ENCODE measurements at regions of chr14 and their contacts with region 1.

Region 1: DNA sequence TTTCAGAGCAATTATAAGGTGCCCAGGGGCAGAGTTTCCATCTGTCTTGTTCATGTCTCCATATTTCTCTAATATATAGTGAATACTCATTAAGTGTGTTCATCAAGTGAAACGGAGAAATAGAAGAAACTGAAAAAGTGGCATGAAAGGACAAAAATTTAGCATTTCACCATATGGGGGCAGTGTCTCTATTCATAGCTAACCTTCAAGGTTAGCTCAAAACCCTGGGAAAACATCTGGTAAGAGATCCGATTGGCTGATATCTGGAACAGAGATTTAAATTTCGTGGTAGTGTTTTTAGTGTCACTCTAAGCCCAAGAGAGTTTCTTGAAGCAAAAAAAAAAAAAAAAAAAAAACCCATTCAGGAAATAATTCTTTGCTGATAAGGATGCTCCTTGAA is 367.5 kb downstream of the DAD1 start:
- DNase-seq: peak; percentile 72
- ATAC-seq: no peak
- H3K4me3 ChIP-seq: no peak overlapping the region
- H3K27ac ChIP-seq: no peak overlapping the region
- H3K4me1 ChIP-seq: peaks cover 13% of the 10 kb centered on the region
- H3K27me3 ChIP-seq: no peaks in the 10 kb centered on the region
- CTCF ChIP-seq: peak; percentile 79

Region 2: GRCh38 chr14:22036541-22037239 is 184.8 kb before region 1 on chr14:
- CTCF ChIA-PET with region 1: no interaction called
- POLR2A ChIA-PET with region 1: no interaction called
- intact Hi-C with region 1: no loop called
- DNase-seq: no peak
- ATAC-seq: no peak
- H3K4me3 ChIP-seq: no peak overlapping the region
- H3K27ac ChIP-seq: no peak overlapping the region
- H3K4me1 ChIP-seq: no peaks in the 10 kb centered on the region
- H3K27me3 ChIP-seq: peaks cover 19% of the 10 kb centered on the region
- CTCF ChIP-seq: no peak

Region 3: DNA sequence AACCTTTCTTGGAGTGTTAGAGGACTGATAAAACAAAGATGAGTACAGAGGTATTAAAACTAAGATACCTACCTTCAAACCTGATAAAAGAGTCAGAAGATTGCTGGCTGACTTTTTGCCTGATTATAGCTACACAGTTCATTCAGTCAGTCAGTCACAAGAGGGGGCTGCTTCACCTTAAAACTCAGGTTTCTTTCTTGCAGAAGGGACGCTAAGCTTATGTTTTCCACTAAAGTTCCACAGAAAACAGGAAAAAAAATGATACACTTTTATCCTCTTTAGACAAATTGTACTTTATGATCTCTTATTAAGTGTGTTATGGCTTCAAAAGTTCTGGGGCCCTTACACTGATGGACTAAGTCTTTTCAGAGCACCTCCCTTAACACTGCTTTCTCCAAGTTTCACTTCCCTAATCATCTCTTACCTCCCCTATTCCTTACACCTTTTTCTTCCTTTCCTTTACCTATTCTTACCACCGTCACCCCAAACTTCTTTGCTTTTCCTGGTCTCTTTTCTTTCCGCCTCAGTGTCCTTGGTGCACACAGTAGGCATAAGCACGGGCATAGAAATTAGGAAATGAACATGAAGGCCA is 99.2 kb before region 1 on chr14:
- CTCF ChIA-PET with region 1: interaction called, 10 read pairs
- POLR2A ChIA-PET with region 1: no interaction called
- intact Hi-C with region 1: no loop called
- DNase-seq: peak; percentile 41
- ATAC-seq: peak; percentile 37; the same call in 1 of the 2 replicates
- H3K4me3 ChIP-seq: no peak overlapping the region
- H3K27ac ChIP-seq: no peak overlapping the region
- H3K4me1 ChIP-seq: no peaks in the 10 kb centered on the region
- H3K27me3 ChIP-seq: peaks cover 43% of the 10 kb centered on the region; the same call in 1 of the 2 replicates
- CTCF ChIP-seq: peak; percentile 54

Region 4: DNA sequence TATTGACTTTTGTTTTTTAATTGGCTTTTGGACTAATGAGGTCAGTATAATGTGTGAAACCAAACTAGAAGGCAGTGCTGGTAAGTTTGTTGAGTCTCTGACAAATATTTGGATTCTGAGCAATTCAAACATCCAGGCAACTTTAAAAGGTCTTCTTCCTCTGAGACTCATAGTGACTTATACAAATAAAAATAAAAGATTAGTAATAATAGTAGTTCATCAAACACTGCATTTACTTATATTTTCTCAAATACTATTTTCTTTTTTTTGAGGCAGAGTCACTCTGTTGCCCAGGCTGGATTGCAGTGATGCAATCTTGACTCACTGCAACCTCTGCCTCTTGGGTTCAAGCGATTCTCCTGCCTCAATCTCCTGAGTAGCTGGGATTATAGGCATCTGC is 29.6 kb after region 1 on chr14:
- CTCF ChIA-PET with region 1: interaction called, 5 read pairs
- POLR2A ChIA-PET with region 1: no interaction called
- intact Hi-C with region 1: loop called (anchors 2 kb)
- DNase-seq: peak; percentile 75
- ATAC-seq: peak; percentile 94
- H3K4me3 ChIP-seq: no peak overlapping the region; the same call in 1 of the 2 replicates
- H3K27ac ChIP-seq: peak overlapping the region; percentile 71
- H3K4me1 ChIP-seq: peaks cover 30% of the 10 kb centered on the region
- H3K27me3 ChIP-seq: no peaks in the 10 kb centered on the region
- CTCF ChIP-seq: no peak

Region 5: GRCh38 chr14:22296722-22297121 is 75.2 kb after region 1 on chr14:
- CTCF ChIA-PET with region 1: interaction called, 11 read pairs
- POLR2A ChIA-PET with region 1: no interaction called
- intact Hi-C with region 1: no loop called
- DNase-seq: peak; percentile 89
- ATAC-seq: peak; percentile 87
- H3K4me3 ChIP-seq: peak overlapping the region; percentile 43; the same call in 1 of the 2 replicates
- H3K27ac ChIP-seq: peak overlapping the region; percentile 23
- H3K4me1 ChIP-seq: peaks cover 47% of the 10 kb centered on the region
- H3K27me3 ChIP-seq: no peaks in the 10 kb centered on the region
- CTCF ChIP-seq: no peak

Region 6: GRCh38 chr14:22314181-22314820 is 92.8 kb after region 1 on chr14:
- CTCF ChIA-PET with region 1: interaction called, 12 read pairs
- POLR2A ChIA-PET with region 1: interaction called, 3 read pairs
- intact Hi-C with region 1: loop called (anchors 1 kb)
- DNase-seq: peak; percentile 88
- ATAC-seq: peak; percentile 52
- H3K4me3 ChIP-seq: no peak overlapping the region
- H3K27ac ChIP-seq: no peak overlapping the region
- H3K4me1 ChIP-seq: peaks cover 29% of the 10 kb centered on the region
- H3K27me3 ChIP-seq: no peaks in the 10 kb centered on the region
- CTCF ChIP-seq: peak; percentile 81

Region 7: GRCh38 chr14:22375321-22375930 is 153.9 kb after region 1 on chr14:
- CTCF ChIA-PET with region 1: interaction called, 17 read pairs
- POLR2A ChIA-PET with region 1: no interaction called
- intact Hi-C with region 1: loop called (anchors 1 kb)
- DNase-seq: peak; percentile 87
- ATAC-seq: peak; percentile 56; the same call in 1 of the 2 replicates
- H3K4me3 ChIP-seq: no peak overlapping the region
- H3K27ac ChIP-seq: no peak overlapping the region
- H3K4me1 ChIP-seq: peaks cover 26% of the 10 kb centered on the region
- H3K27me3 ChIP-seq: no peaks in the 10 kb centered on the region
- CTCF ChIP-seq: peak; percentile 85

Region 8: GRCh38 chr14:22432348-22432976 is 211.0 kb after region 1 on chr14:
- CTCF ChIA-PET with region 1: interaction called, 19 read pairs
- POLR2A ChIA-PET with region 1: no interaction called
- intact Hi-C with region 1: no loop called
- DNase-seq: peak; percentile 97
- ATAC-seq: peak; percentile 93
- H3K4me3 ChIP-seq: no peak overlapping the region
- H3K27ac ChIP-seq: no peak overlapping the region
- H3K4me1 ChIP-seq: peaks cover 15% of the 10 kb centered on the region
- H3K27me3 ChIP-seq: no peaks in the 10 kb centered on the region
- CTCF ChIP-seq: no peak

Measured in PC-3 (cell line).